Activated CD8-positive, alpha-beta T cell treated with anti-CD3 and anti-CD28 coated beads for 36 hours (primary cell): ENCODE measurements at regions of chr2 and their contacts with region 1.

Region 1: DNA sequence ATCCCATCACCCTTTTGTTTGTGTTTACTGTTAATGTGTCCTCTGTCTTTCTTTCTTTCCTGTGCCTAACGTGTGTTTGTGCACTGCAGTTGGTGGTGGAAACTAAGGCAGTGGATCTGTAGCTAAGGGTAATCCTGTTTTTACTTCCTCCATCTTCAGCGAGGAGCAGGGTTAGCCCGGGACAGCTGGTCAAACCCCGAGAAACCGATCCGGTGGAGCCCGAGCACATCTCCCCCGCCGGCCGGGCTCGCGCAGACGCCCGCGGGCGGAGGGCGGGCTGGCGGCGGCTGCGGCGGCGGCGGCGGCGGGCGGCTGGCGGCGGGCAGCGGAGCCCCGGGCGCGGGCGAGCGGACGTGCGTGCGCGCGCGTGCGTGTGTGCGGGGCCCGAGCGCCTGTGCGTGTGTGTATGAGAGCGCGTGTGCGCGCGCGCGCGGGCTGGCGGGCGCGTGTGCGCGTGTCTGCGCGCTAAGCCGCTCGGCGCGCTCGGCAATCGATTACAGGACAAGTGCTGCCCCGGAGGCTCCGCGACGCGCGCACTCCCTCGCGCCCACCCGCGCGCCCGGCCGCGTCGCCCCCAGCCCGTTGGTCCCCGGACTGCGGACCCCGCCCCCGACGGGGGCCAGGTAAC is at the start of gene IKZF2:
- DNase-seq: peak; percentile 79
- ATAC-seq: peak; percentile 77
- H3K4me3 Mint-ChIP-seq: peak within 1 kb of the TSS; percentile 83
- H3K27ac Mint-ChIP-seq: peak within 1 kb of the TSS; percentile 88
- H3K4me1 Mint-ChIP-seq: peaks cover 35% of the 10 kb centered on the region
- H3K27me3 Mint-ChIP-seq: peaks cover 12% of the 10 kb centered on the region
- CTCF ChIP-seq: no peak
- total RNA-seq, gene IKZF2: 24.4 to 28.7 TPM

Region 2: GRCh38 chr2:212777020-212777491 is 374.5 kb before region 1 on chr2:
- CTCF ChIA-PET with region 1: interaction called, 36 read pairs
- POLR2A ChIA-PET with region 1: no interaction called
- intact Hi-C with region 1: loop called (anchors 2 kb)
- DNase-seq: no peak
- ATAC-seq: peak; percentile 72
- H3K4me3 Mint-ChIP-seq: no peak overlapping the region
- H3K27ac Mint-ChIP-seq: no peak overlapping the region
- H3K4me1 Mint-ChIP-seq: peaks cover 3% of the 10 kb centered on the region
- H3K27me3 Mint-ChIP-seq: no peaks in the 10 kb centered on the region
- CTCF ChIP-seq: peak; percentile 62

Region 3: DNA sequence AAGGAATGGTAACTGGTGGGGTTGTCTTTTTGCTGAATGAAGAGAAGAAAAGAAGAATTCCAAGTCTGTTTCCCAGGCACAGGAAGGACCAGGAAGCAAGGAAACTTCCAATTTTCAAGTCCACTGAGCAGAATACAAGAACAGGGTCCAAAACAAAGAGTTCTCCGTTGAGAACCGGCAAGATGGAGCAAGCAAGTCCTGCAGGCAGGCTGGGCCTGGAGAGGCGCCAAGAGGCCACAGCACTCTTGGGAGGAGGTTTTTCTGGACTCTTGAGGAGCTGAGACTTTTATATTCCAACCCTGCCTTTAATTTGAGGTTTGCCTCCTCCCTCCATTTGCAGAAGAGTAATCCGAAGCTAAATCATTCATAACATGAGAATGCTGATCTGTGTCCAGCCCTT is 224.6 kb before region 1 on chr2:
- CTCF ChIA-PET with region 1: no interaction called
- POLR2A ChIA-PET with region 1: no interaction called
- intact Hi-C with region 1: loop called (anchors 5 kb)
- DNase-seq: no peak
- ATAC-seq: no peak
- H3K4me3 Mint-ChIP-seq: no peak overlapping the region
- H3K27ac Mint-ChIP-seq: no peak overlapping the region
- H3K4me1 Mint-ChIP-seq: peaks cover 19% of the 10 kb centered on the region
- H3K27me3 Mint-ChIP-seq: no peaks in the 10 kb centered on the region
- CTCF ChIP-seq: no peak

Region 4: DNA sequence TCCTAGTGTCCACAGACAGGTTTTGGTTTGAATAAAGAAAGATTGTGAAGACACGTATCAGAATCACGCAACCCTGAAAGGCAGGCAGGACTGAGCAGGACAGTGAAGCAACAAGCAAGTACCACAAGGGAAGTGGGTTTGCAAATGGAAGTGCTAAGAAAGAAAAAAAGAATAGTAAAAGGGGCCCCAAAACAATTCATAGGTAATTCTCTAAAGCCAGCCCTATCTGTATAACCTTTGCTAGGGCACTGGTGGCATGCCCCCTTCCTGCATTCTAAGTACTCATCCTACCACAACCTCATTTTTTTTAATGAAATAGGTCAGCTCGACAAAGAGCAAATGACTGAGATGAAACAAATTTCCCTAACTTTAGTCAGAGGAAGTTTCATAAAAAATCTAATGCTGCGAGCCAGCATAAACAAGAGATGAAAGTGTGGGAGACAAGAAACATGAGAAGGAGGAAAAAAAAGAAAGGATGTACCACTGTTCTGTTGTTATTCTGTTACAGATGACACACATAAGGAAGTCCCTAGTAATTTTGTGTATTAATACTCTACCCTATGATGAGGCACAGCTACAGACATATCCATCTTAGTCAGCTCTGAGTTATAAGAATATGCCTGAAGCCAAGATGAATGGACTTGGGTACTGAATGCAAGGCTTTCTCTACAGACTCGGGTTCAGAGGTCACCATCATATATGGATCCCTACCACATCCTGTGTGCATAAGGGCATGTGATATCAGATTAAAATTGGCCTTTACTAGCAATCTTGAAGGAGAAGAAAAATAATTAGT is 32.3 kb before region 1 on chr2:
- CTCF ChIA-PET with region 1: interaction called, 11 read pairs
- POLR2A ChIA-PET with region 1: interaction called, 14 read pairs
- intact Hi-C with region 1: loop called (anchors 5 kb)
- DNase-seq: peak; percentile 73
- ATAC-seq: peak; percentile 88
- H3K4me3 Mint-ChIP-seq: peak overlapping the region; percentile 50
- H3K27ac Mint-ChIP-seq: peak overlapping the region; percentile 90
- H3K4me1 Mint-ChIP-seq: peaks cover 66% of the 10 kb centered on the region
- H3K27me3 Mint-ChIP-seq: no peaks in the 10 kb centered on the region
- CTCF ChIP-seq: no peak

Region 5: GRCh38 chr2:213232649-213233437 is 81.3 kb after region 1 on chr2:
- CTCF ChIA-PET with region 1: no interaction called
- POLR2A ChIA-PET with region 1: interaction called, 3 read pairs
- intact Hi-C with region 1: loop called (anchors 5 kb)
- DNase-seq: peak; percentile 75
- ATAC-seq: peak; percentile 89
- H3K4me3 Mint-ChIP-seq: peak overlapping the region; percentile 55
- H3K27ac Mint-ChIP-seq: peak overlapping the region; percentile 81
- H3K4me1 Mint-ChIP-seq: peaks cover 27% of the 10 kb centered on the region
- H3K27me3 Mint-ChIP-seq: peaks cover 3% of the 10 kb centered on the region
- CTCF ChIP-seq: no peak